AG04450 (cell line): ENCODE measurements at regions of chr6 and their contacts with region 1.

Region 1: GRCh38 chr6:122789182-122790027 is at the start of gene SMPDL3A:
- DNase-seq: peak; percentile 92
- H3K4me3 ChIP-seq: peak within 1 kb of the TSS; percentile 91
- H3K27ac ChIP-seq: peak within 1 kb of the TSS; percentile 96
- H3K27me3 ChIP-seq: no peaks in the 10 kb centered on the region
- CTCF ChIP-seq: peak; percentile 43; the same call in 1 of the 2 replicates
- polyA plus RNA-seq, gene SMPDL3A: 84.4 and 105 TPM in 2 replicates

Region 2: GRCh38 chr6:122803171-122803661 is 13.8 kb after region 1 on chr6:
- CTCF ChIA-PET with region 1: interaction called, 35 read pairs
- POLR2A ChIA-PET with region 1: interaction called, 37 read pairs
- DNase-seq: peak; percentile 79
- H3K4me3 ChIP-seq: no peak overlapping the region
- H3K27ac ChIP-seq: peak overlapping the region; percentile 47
- H3K27me3 ChIP-seq: no peaks in the 10 kb centered on the region
- CTCF ChIP-seq: no peak

Region 3: GRCh38 chr6:122809001-122809400 is 19.6 kb after region 1 on chr6:
- CTCF ChIA-PET with region 1: interaction called, 7 read pairs
- POLR2A ChIA-PET with region 1: interaction called, 29 read pairs
- DNase-seq: no peak
- H3K4me3 ChIP-seq: no peak overlapping the region
- H3K27ac ChIP-seq: no peak overlapping the region
- H3K27me3 ChIP-seq: no peaks in the 10 kb centered on the region
- CTCF ChIP-seq: no peak

Region 4: DNA sequence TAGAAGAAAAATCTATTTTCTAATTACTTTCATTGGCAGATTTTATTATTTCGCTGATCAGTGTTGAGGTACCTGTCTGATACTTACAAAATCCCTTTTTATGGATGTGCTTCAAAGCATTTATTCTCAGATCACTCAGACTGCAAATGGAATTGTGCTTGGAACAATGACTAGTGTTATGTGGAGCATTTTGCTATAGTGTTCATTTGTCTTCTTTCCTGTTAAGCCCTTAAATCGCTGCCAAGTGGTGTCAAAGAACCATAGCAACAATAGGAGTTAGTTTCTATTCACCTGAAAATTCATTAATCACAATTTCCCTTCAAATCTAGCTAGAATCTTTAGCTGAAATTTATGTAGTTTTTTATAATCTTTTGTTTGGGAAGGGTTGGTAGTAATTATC is 29.5 kb after region 1 on chr6:
- CTCF ChIA-PET with region 1: interaction called, 4 read pairs
- POLR2A ChIA-PET with region 1: interaction called, 11 read pairs
- DNase-seq: no peak
- H3K4me3 ChIP-seq: no peak overlapping the region
- H3K27ac ChIP-seq: no peak overlapping the region
- H3K27me3 ChIP-seq: no peaks in the 10 kb centered on the region
- CTCF ChIP-seq: no peak

Region 5: GRCh38 chr6:122969999-122970533 is 180.7 kb after region 1 on chr6:
- CTCF ChIA-PET with region 1: no interaction called
- POLR2A ChIA-PET with region 1: no interaction called
- DNase-seq: no peak
- H3K4me3 ChIP-seq: no peak overlapping the region
- H3K27ac ChIP-seq: no peak overlapping the region
- H3K27me3 ChIP-seq: no peaks in the 10 kb centered on the region
- CTCF ChIP-seq: no peak